ENCODE measurements at regions of chr6 and their contacts with region 1.

Region 1: GRCh38 chr6:149316798-149317655 is 485 bp upstream of the TAB2 start:
- DNase-seq: peak; percentile 91 to 93 (median 92)
- H3K4me3 ChIP-seq: peak overlapping the region; percentile 27 to 64
- H3K4me3 Mint-ChIP-seq: peak overlapping the region; percentile 80 to 93 (median 87)
- H3K27ac ChIP-seq: peak overlapping the region; percentile 86
- H3K27ac Mint-ChIP-seq: peak overlapping the region; percentile 86 to 93 (median 89)
- H3K4me1 ChIP-seq: peaks cover 33% of the 10 kb centered on the region
- H3K4me1 Mint-ChIP-seq: peaks cover 14 to 40% (median 24%) of the 10 kb centered on the region in 4 donors
- H3K27me3 ChIP-seq: no peaks in the 10 kb centered on the region
- H3K27me3 Mint-ChIP-seq: no peaks in the 10 kb centered on the region

Region 2: DNA sequence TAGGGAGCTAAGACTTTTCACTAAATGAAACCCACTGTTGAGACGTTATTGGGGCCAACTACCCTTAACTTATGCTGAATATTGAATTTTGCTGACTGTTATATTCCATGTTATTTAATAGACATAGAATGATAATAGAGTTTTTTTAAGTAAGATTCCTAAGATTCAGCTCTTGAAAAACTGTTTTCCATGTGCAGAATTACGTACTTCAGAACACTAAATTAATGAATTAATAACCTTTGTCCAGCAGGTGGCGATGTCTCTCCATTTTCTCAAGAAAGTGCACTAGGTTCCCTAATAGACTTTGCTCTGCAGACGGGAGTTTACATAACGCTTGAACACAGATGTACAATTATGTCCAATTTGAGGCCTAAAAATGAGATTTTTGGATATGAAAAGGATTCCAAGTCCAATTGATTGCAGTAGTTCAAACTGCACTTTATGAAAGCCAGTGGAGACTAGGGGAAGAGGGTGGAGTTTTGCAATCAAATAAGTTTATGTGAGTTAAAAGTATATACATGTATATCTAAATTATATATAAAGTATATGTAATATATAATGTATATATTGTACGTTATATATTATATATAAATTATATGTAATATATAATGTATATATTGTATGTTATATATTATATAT is 288.1 kb before region 1 on chr6:
- CTCF ChIA-PET with region 1: no interaction called
- POLR2A ChIA-PET with region 1: interaction called, 10 read pairs
- intact Hi-C with region 1: no loop called
- DNase-seq: peak; percentile 77 to 80 (median 78)
- H3K4me3 ChIP-seq: no peak overlapping the region
- H3K4me3 Mint-ChIP-seq: peak overlapping the region in 2 of 8 donors; percentile 66 to 69
- H3K27ac ChIP-seq: no peak overlapping the region
- H3K27ac Mint-ChIP-seq: peak overlapping the region in 6 of 7 donors; percentile 10 to 93 (median 78)
- H3K4me1 ChIP-seq: peaks cover 49% of the 10 kb centered on the region
- H3K4me1 Mint-ChIP-seq: peaks cover 33 to 46% (median 42%) of the 10 kb centered on the region in 4 donors
- H3K27me3 ChIP-seq: no peaks in the 10 kb centered on the region
- H3K27me3 Mint-ChIP-seq: no peaks in the 10 kb centered on the region

Region 3: GRCh38 chr6:149094156-149094555 is 222.9 kb before region 1 on chr6:
- CTCF ChIA-PET with region 1: no interaction called
- POLR2A ChIA-PET with region 1: interaction called, 16 read pairs
- intact Hi-C with region 1: no loop called
- DNase-seq: peak in 1 of 5 donors; percentile 12
- H3K4me3 ChIP-seq: peak overlapping the region in 1 of 2 donors; percentile 13
- H3K4me3 Mint-ChIP-seq: peak overlapping the region; percentile 57 to 76 (median 68)
- H3K27ac ChIP-seq: peak overlapping the region; percentile 27
- H3K27ac Mint-ChIP-seq: peak overlapping the region; percentile 74 to 96 (median 92)
- H3K4me1 ChIP-seq: peaks cover 65% of the 10 kb centered on the region
- H3K4me1 Mint-ChIP-seq: peaks cover 36 to 63% (median 52%) of the 10 kb centered on the region in 4 donors
- H3K27me3 ChIP-seq: no peaks in the 10 kb centered on the region
- H3K27me3 Mint-ChIP-seq: no peaks in the 10 kb centered on the region

Region 4: GRCh38 chr6:149190224-149190831 is 126.7 kb before region 1 on chr6:
- CTCF ChIA-PET with region 1: interaction called, 3 read pairs
- POLR2A ChIA-PET with region 1: interaction called, 5 read pairs
- intact Hi-C with region 1: loop called (anchors 5 kb)
- DNase-seq: peak; percentile 23 to 48 (median 32)
- H3K4me3 ChIP-seq: no peak overlapping the region
- H3K4me3 Mint-ChIP-seq: no peak overlapping the region
- H3K27ac ChIP-seq: no peak overlapping the region
- H3K27ac Mint-ChIP-seq: peak overlapping the region in 4 of 7 donors; percentile 14 to 77 (median 36)
- H3K4me1 ChIP-seq: peaks cover 16% of the 10 kb centered on the region
- H3K4me1 Mint-ChIP-seq: peaks cover 20 to 33% (median 24%) of the 10 kb centered on the region in 4 donors
- H3K27me3 ChIP-seq: no peaks in the 10 kb centered on the region
- H3K27me3 Mint-ChIP-seq: no peaks in the 10 kb centered on the region

Region 5: DNA sequence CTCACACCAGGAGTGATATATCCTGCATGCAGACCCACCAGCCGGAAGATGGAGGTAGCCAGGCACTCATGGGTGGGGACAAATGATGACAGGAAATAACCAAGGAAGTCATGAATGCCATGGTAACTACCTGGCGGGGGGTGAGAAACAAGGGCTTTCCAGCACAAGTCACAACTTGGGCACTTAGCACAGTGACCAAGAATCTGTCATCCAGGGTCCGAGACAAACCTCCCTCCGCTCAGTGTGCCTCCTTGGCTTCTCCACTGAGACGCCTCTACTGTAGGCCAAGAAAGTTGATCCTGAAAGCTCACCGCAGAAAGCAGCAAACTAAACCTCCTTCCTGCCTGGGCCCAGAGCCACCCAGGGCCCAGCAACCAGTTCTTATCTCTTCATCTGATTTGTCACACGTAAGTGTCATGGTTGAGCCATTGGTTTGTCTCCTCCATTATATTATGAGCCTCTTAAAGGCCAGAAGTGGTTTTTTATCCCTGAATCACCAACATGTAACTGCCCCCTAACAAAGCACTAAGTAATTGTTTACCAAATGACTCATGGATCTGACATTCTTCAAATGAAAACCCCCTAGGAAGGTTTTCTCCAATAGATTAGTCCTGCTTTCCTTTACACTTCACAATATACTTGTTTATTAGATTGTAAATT is 83.8 kb before region 1 on chr6:
- CTCF ChIA-PET with region 1: interaction called, 3 read pairs
- POLR2A ChIA-PET with region 1: interaction called, 13 read pairs
- intact Hi-C with region 1: loop called (anchors 1 kb)
- DNase-seq: peak; percentile 57 to 78 (median 74)
- H3K4me3 ChIP-seq: peak overlapping the region; percentile 2 to 18
- H3K4me3 Mint-ChIP-seq: peak overlapping the region; percentile 24 to 94 (median 82)
- H3K27ac ChIP-seq: peak overlapping the region; percentile 83
- H3K27ac Mint-ChIP-seq: peak overlapping the region; percentile 94 to 100 (median 98)
- H3K4me1 ChIP-seq: peaks cover 43% of the 10 kb centered on the region
- H3K4me1 Mint-ChIP-seq: peaks cover 44 to 68% (median 55%) of the 10 kb centered on the region in 4 donors
- H3K27me3 ChIP-seq: no peaks in the 10 kb centered on the region
- H3K27me3 Mint-ChIP-seq: no peaks in the 10 kb centered on the region

Region 6: DNA sequence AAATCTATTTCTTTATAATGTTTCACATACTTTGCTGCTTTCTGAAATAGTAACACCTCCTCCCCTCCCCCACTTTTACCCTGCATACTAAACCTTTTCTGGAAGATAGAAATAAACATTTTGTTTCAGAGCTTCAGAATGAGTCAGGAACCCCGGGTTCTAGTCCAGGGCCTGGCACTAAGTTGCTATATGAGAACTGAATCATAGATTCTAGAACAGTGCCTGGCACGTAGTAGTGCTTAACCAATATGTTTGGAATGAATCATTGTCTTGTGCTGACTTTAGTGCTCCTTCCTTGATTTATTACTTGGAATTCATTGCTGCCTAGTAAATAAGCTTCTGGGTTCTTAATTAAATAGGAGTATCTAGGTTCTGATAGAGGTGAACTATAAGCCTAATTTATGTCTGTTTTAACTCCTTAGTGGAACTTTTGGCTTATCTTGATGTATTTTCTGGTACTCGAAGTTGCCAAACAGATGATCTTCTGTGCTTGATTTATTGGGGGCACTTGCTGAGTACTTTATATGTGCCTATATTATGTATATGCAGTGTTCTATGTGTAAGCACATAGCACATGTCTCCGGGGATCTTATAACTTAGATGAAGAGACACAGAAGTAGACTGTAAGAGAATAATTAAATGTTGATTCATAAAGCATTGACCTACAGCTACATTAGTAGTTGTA is 19.0 kb after region 1 on chr6:
- CTCF ChIA-PET with region 1: interaction called, 5 read pairs
- POLR2A ChIA-PET with region 1: interaction called, 10 read pairs
- intact Hi-C with region 1: loop called (anchors 1 kb)
- DNase-seq: no peak
- H3K4me3 ChIP-seq: no peak overlapping the region
- H3K4me3 Mint-ChIP-seq: peak overlapping the region; percentile 7 to 72 (median 63)
- H3K27ac ChIP-seq: peak overlapping the region; percentile 15
- H3K27ac Mint-ChIP-seq: peak overlapping the region; percentile 26 to 64 (median 60)
- H3K4me1 ChIP-seq: peaks cover 93% of the 10 kb centered on the region
- H3K4me1 Mint-ChIP-seq: peaks cover 69 to 90% (median 77%) of the 10 kb centered on the region in 4 donors
- H3K27me3 ChIP-seq: no peaks in the 10 kb centered on the region
- H3K27me3 Mint-ChIP-seq: no peaks in the 10 kb centered on the region

Region 7: GRCh38 chr6:149499066-149499465 is 182.0 kb after region 1 on chr6:
- CTCF ChIA-PET with region 1: no interaction called
- POLR2A ChIA-PET with region 1: interaction called, 6 read pairs
- intact Hi-C with region 1: loop called (anchors 5 kb)
- DNase-seq: no peak
- H3K4me3 ChIP-seq: no peak overlapping the region
- H3K4me3 Mint-ChIP-seq: no peak overlapping the region
- H3K27ac ChIP-seq: no peak overlapping the region
- H3K27ac Mint-ChIP-seq: peak overlapping the region in 6 of 7 donors; percentile 51 to 96 (median 84)
- H3K4me1 ChIP-seq: peaks cover 52% of the 10 kb centered on the region
- H3K4me1 Mint-ChIP-seq: peaks cover 29 to 61% (median 40%) of the 10 kb centered on the region in 4 donors
- H3K27me3 ChIP-seq: no peaks in the 10 kb centered on the region
- H3K27me3 Mint-ChIP-seq: no peaks in the 10 kb centered on the region

Measured in CD4-positive, alpha-beta memory T cell (primary cell).